ENCODE measurements at regions of chr22 and their contacts with region 1.

Region 1: GRCh38 chr22:48545987-48546386 is 1281.7 kb downstream of the BRD1 start:
- DNase-seq: no peak
- ATAC-seq: no peak
- H3K4me3 ChIP-seq: no peak overlapping the region
- H3K27ac ChIP-seq: no peak overlapping the region
- H3K4me1 ChIP-seq: no peaks in the 10 kb centered on the region
- H3K27me3 ChIP-seq: peaks cover 0 to 40% (median 23%) of the 10 kb centered on the region in 7 donors
- CTCF ChIP-seq: no peak

Region 2: GRCh38 chr22:48591286-48592065 is 45.5 kb after region 1 on chr22:
- intact Hi-C with region 1: loop called in 1 of 10 experiments (anchors 1 kb)
- DNase-seq: no peak
- ATAC-seq: no peak
- H3K4me3 ChIP-seq: no peak overlapping the region
- H3K27ac ChIP-seq: no peak overlapping the region
- H3K4me1 ChIP-seq: no peaks in the 10 kb centered on the region
- H3K27me3 ChIP-seq: peaks cover 0 to 61% (median 44%) of the 10 kb centered on the region in 7 donors
- CTCF ChIP-seq: no peak

Measured in heart right ventricle (tissue), 16 donors.